PC-9 (cell line): ENCODE measurements at regions of chr7 and their contacts with region 1.

Region 1: DNA sequence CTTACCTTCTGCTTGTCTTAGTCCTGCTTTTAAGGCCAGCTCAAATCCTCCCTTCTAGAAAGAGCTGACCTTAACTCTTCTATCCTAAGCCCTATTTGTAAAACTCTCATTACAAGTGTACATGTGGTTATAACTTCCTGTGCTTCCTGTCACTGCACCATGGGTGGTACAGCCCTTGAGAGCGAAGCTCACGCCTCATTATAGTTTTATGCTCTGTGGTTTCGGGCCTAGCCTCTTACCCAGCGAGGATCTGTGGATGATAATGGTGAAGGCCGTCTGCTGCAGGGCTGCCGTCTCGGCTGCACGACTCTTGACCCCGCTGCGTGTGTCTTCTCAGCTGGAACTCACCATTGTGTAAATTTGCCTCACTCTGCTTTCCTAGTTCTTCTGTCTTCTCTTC is 74.6 kb downstream of the CUL1 start:
- DNase-seq: no peak
- H3K4me3 ChIP-seq: no peak overlapping the region
- H3K27ac ChIP-seq: peak overlapping the region; percentile 41
- H3K4me1 ChIP-seq: peaks cover 19% of the 10 kb centered on the region
- H3K27me3 ChIP-seq: no peaks in the 10 kb centered on the region
- CTCF ChIP-seq: no peak

Region 2: GRCh38 chr7:148503875-148504487 is 269.4 kb before region 1 on chr7:
- CTCF ChIA-PET with region 1: no interaction called
- POLR2A ChIA-PET with region 1: no interaction called
- intact Hi-C with region 1: loop called (anchors 1 kb)
- DNase-seq: no peak
- H3K4me3 ChIP-seq: no peak overlapping the region
- H3K27ac ChIP-seq: no peak overlapping the region
- H3K4me1 ChIP-seq: no peaks in the 10 kb centered on the region
- H3K27me3 ChIP-seq: peaks cover 73% of the 10 kb centered on the region
- CTCF ChIP-seq: peak; percentile 87

Region 3: GRCh38 chr7:148575640-148576411 is 197.5 kb before region 1 on chr7:
- CTCF ChIA-PET with region 1: no interaction called
- POLR2A ChIA-PET with region 1: no interaction called
- intact Hi-C with region 1: loop called (anchors 5 kb)
- DNase-seq: peak in 1 of 2 experiments; percentile 72
- H3K4me3 ChIP-seq: no peak overlapping the region
- H3K27ac ChIP-seq: no peak overlapping the region
- H3K4me1 ChIP-seq: no peaks in the 10 kb centered on the region
- H3K27me3 ChIP-seq: no peaks in the 10 kb centered on the region
- CTCF ChIP-seq: peak; percentile 92

Region 4: GRCh38 chr7:148687555-148687954 is 85.8 kb before region 1 on chr7:
- CTCF ChIA-PET with region 1: no interaction called
- POLR2A ChIA-PET with region 1: no interaction called
- intact Hi-C with region 1: no loop called
- DNase-seq: no peak
- H3K4me3 ChIP-seq: no peak overlapping the region
- H3K27ac ChIP-seq: no peak overlapping the region
- H3K4me1 ChIP-seq: no peaks in the 10 kb centered on the region
- H3K27me3 ChIP-seq: no peaks in the 10 kb centered on the region
- CTCF ChIP-seq: no peak

Region 5: GRCh38 chr7:148698397-148699023 is 74.8 kb before region 1 on chr7 and contains the start of gene CUL1:
- CTCF ChIA-PET with region 1: no interaction called
- POLR2A ChIA-PET with region 1: no interaction called
- intact Hi-C with region 1: loop called (anchors 1 kb)
- DNase-seq: peak; percentile 64 to 92
- H3K4me3 ChIP-seq: peak within 1 kb of the TSS; percentile 76
- H3K27ac ChIP-seq: peak within 1 kb of the TSS; percentile 79
- H3K4me1 ChIP-seq: peaks cover 39% of the 10 kb centered on the region
- H3K27me3 ChIP-seq: no peaks in the 10 kb centered on the region
- CTCF ChIP-seq: no peak
- total RNA-seq, gene CUL1: 54.7 and 78.3 TPM in 2 replicates

Region 6: DNA sequence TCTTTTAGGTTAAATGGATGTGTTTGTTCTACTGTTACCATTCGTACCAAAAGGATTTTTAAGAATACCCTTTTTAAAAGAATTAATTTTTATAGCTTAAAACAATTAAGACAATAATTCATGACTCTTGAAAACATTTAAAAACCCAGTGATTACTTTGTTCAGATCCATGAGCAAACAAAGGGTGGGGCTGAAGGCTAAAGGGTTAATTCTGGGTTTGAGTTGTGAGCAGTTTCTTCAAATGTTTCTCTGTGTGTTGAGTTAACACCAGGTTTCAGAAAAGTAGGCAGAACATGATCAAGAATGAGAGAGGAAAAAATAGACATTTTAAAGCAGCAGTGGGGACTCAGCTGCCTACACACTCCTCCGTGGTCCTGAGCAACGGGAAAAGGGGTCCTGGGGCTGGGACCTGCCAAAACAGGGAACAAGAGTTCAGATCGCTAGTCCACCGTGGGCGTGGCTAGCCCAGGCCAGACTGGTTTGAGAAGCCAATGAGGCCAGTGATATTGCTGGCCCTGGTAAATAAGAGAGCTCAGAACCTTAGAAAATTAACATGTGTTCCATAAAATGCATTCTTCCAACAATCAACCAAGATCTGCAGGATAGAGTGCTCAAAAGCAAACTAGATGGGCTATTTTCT is 125.6 kb after region 1 on chr7:
- CTCF ChIA-PET with region 1: no interaction called
- POLR2A ChIA-PET with region 1: no interaction called
- intact Hi-C with region 1: no loop called
- DNase-seq: no peak
- H3K4me3 ChIP-seq: no peak overlapping the region
- H3K27ac ChIP-seq: no peak overlapping the region
- H3K4me1 ChIP-seq: 0 out of 2 replicates have a peak, but pooled peaks cover 4% of the 10 kb centered on the region
- H3K27me3 ChIP-seq: no peaks in the 10 kb centered on the region
- CTCF ChIP-seq: no peak